ENCODE measurements at regions of chr14 and their contacts with region 1.

Region 1: GRCh38 chr14:35046048-35046741 is at the start of gene FAM177A1:
- DNase-seq: peak; percentile 93 to 100 (median 100)
- ATAC-seq: peak; percentile 83 to 93 (median 91)
- H3K4me3 ChIP-seq: peak within 1 kb of the TSS; percentile 71 to 91
- H3K4me3 Mint-ChIP-seq: peak within 1 kb of the TSS; percentile 73 to 88 (median 85)
- H3K27ac ChIP-seq: peak within 1 kb of the TSS; percentile 99
- H3K27ac Mint-ChIP-seq: peak within 1 kb of the TSS; percentile 95 to 96
- H3K4me1 ChIP-seq: peaks cover 4 to 12% of the 10 kb centered on the region in 2 experiments
- H3K4me1 Mint-ChIP-seq: peaks cover 25 to 31% (median 27%) of the 10 kb centered on the region in 3 donors
- H3K27me3 ChIP-seq: no peaks in the 10 kb centered on the region
- H3K27me3 Mint-ChIP-seq: no peaks in the 10 kb centered on the region
- total RNA-seq, gene FAM177A1: 35.7 to 141 (median 38.7) TPM

Region 2: GRCh38 chr14:34436960-34437728 is 609.1 kb before region 1 on chr14:
- CTCF ChIA-PET with region 1: no interaction called
- POLR2A ChIA-PET with region 1: no interaction called
- DNase-seq: no peak
- ATAC-seq: no peak
- H3K4me3 ChIP-seq: no peak overlapping the region
- H3K4me3 Mint-ChIP-seq: no peak overlapping the region
- H3K27ac ChIP-seq: no peak overlapping the region
- H3K27ac Mint-ChIP-seq: no peak overlapping the region
- H3K4me1 ChIP-seq: no peaks in the 10 kb centered on the region
- H3K4me1 Mint-ChIP-seq: peaks cover 0 to 5% (median 0%) of the 10 kb centered on the region in 3 donors
- H3K27me3 ChIP-seq: no peaks in the 10 kb centered on the region
- H3K27me3 Mint-ChIP-seq: no peaks in the 10 kb centered on the region

Region 3: DNA sequence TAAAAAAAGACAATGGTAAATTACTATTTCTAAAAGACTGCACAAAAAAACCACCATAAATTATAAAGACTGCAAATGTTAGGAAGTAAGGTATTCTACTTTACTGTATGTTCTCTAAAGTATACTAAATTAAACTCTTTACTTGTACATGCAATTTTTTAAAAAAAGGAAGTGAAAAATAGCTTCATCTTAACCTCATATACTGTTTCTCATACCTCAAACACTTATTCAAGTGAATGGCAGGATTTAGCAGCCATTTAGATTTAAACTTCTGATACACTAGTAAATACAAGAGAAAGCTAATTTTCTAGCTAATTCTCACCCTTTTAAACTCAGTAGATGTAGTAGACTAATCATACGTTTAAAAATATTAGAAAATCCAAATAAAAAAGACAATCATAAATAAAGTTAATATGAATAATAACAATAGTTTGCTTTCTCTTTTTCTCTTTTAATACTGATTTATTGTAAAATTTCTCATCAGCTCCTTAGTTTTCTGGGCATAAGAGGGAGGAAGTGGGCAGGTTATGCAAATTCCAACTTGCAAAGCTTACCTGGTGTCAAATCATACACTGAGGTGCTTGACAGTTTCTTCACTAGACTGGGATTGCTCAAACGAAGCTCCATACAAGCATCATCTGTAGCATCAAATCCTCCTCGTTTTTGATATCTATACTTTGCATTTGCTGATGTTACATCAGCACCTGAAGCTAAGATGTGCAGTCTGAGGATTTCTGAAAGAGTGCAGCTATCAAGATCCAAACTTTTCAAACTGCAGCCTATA is 260.8 kb before region 1 on chr14:
- CTCF ChIA-PET with region 1: no interaction called
- POLR2A ChIA-PET with region 1: no interaction called
- DNase-seq: no peak
- ATAC-seq: no peak
- H3K4me3 ChIP-seq: no peak overlapping the region
- H3K4me3 Mint-ChIP-seq: no peak overlapping the region
- H3K27ac ChIP-seq: no peak overlapping the region
- H3K27ac Mint-ChIP-seq: peak overlapping the region in 1 of 2 donors; percentile 22
- H3K4me1 ChIP-seq: no peaks in the 10 kb centered on the region
- H3K4me1 Mint-ChIP-seq: peaks cover 4 to 8% (median 7%) of the 10 kb centered on the region in 3 donors
- H3K27me3 ChIP-seq: no peaks in the 10 kb centered on the region
- H3K27me3 Mint-ChIP-seq: no peaks in the 10 kb centered on the region

Region 4: GRCh38 chr14:35034440-35034833 is 11.8 kb before region 1 on chr14:
- CTCF ChIA-PET with region 1: no interaction called
- POLR2A ChIA-PET with region 1: interaction called, 3 to 10 read pairs
- DNase-seq: no peak
- ATAC-seq: no peak
- H3K4me3 ChIP-seq: no peak overlapping the region
- H3K4me3 Mint-ChIP-seq: no peak overlapping the region
- H3K27ac ChIP-seq: no peak overlapping the region
- H3K27ac Mint-ChIP-seq: no peak overlapping the region
- H3K4me1 ChIP-seq: no peaks in the 10 kb centered on the region
- H3K4me1 Mint-ChIP-seq: no peaks in the 10 kb centered on the region
- H3K27me3 ChIP-seq: no peaks in the 10 kb centered on the region
- H3K27me3 Mint-ChIP-seq: no peaks in the 10 kb centered on the region

Region 5: DNA sequence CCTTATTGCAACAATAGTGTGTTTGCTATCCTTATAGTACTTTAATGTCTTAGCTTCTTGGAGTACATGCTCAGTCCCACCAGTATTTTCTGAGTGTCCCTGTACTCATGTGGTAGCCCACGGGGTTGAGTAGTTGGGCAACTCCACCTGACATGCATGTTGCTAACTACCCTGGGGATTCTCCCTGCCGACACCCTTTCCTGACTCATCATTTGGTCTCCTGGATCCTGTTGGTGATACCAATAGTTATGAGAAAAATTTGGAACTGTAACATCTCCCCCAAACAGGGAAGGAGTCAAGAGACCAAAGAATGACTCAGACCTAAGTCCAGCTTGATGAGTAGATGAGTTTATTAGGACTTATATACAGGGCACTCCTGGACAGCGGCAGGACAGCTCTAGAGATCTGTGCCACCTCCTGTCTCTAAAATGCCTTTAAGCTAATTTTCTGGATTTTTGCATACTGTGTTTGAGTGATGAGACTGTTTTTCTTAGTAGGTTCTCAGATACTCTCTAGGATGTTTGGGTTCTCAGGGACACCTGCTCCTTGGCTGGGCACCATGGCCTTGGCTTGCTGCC is 881.6 kb after region 1 on chr14:
- CTCF ChIA-PET with region 1: no interaction called
- POLR2A ChIA-PET with region 1: no interaction called
- DNase-seq: no peak
- ATAC-seq: no peak
- H3K4me3 ChIP-seq: no peak overlapping the region
- H3K4me3 Mint-ChIP-seq: no peak overlapping the region
- H3K27ac ChIP-seq: no peak overlapping the region
- H3K27ac Mint-ChIP-seq: no peak overlapping the region
- H3K4me1 ChIP-seq: peaks cover 2 to 10% of the 10 kb centered on the region in 2 experiments
- H3K4me1 Mint-ChIP-seq: peaks cover 7 to 15% (median 9%) of the 10 kb centered on the region in 3 donors
- H3K27me3 ChIP-seq: no peaks in the 10 kb centered on the region
- H3K27me3 Mint-ChIP-seq: no peaks in the 10 kb centered on the region